Activated CD8-positive, alpha-beta T cell treated with anti-CD3 and anti-CD28 coated beads for 36 hours (primary cell): ENCODE measurements at regions of chr6 and their contacts with region 1.

Region 1: GRCh38 chr6:150395398-150396009 is 26.7 kb downstream of the IYD start:
- DNase-seq: peak; percentile 61
- ATAC-seq: peak; percentile 71
- H3K4me3 Mint-ChIP-seq: no peak overlapping the region
- H3K27ac Mint-ChIP-seq: no peak overlapping the region
- H3K4me1 Mint-ChIP-seq: no peaks in the 10 kb centered on the region
- H3K27me3 Mint-ChIP-seq: peaks cover 5% of the 10 kb centered on the region
- CTCF ChIP-seq: peak; percentile 64

Region 2: GRCh38 chr6:150380256-150380655 is 15.2 kb before region 1 on chr6:
- CTCF ChIA-PET with region 1: interaction called, 20 read pairs
- POLR2A ChIA-PET with region 1: no interaction called
- intact Hi-C with region 1: no loop called
- DNase-seq: no peak
- ATAC-seq: no peak
- H3K4me3 Mint-ChIP-seq: no peak overlapping the region
- H3K27ac Mint-ChIP-seq: no peak overlapping the region
- H3K4me1 Mint-ChIP-seq: no peaks in the 10 kb centered on the region
- H3K27me3 Mint-ChIP-seq: peaks cover 16% of the 10 kb centered on the region
- CTCF ChIP-seq: no peak

Region 3: GRCh38 chr6:150409576-150410066 is 14.1 kb after region 1 on chr6:
- CTCF ChIA-PET with region 1: interaction called, 27 read pairs
- POLR2A ChIA-PET with region 1: no interaction called
- intact Hi-C with region 1: no loop called
- DNase-seq: no peak
- ATAC-seq: no peak
- H3K4me3 Mint-ChIP-seq: no peak overlapping the region
- H3K27ac Mint-ChIP-seq: no peak overlapping the region
- H3K4me1 Mint-ChIP-seq: no peaks in the 10 kb centered on the region
- H3K27me3 Mint-ChIP-seq: peaks cover 42% of the 10 kb centered on the region
- CTCF ChIP-seq: no peak